Astrocyte of the cerebellum (primary cell): ENCODE measurements at regions of chr7 and their contacts with region 1.

Region 1: DNA sequence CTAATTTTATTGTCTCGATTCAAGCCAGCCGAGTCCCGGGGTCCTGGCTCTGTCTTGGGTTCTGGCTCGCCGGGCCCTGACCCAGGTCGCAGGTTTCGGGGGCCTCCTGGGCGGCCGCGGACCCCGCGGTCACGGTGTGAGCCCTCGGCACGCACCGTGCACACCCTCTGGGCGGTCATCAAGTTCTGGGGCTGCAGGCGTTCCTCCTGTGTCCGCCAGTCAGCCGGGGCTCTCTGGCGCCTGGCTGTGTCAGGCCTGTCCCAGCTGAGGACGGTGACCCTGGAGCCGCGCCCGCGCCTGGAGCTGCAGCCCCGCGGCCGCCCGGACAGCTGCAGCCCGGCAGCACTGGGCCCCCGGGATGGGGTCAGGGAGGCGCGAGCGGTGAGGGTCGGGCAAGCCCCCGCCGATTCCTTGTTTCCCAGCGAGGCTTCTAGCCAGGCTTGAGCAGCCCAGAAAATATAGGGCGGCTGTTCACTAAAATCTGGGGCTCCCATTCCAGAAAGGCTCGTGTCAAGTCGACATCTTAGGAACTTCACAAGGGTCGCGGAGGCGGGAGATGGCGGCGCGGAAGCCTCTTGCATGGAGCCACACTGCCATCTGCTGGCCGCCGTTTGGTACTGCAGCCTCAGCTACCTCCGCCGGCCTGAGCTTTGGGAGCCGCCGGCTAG is 4.2 kb upstream of the HOXA7 start:
- DNase-seq: peak; percentile 59
- H3K4me3 ChIP-seq: peak overlapping the region; percentile 43
- CTCF ChIP-seq: peak; percentile 92

Region 2: DNA sequence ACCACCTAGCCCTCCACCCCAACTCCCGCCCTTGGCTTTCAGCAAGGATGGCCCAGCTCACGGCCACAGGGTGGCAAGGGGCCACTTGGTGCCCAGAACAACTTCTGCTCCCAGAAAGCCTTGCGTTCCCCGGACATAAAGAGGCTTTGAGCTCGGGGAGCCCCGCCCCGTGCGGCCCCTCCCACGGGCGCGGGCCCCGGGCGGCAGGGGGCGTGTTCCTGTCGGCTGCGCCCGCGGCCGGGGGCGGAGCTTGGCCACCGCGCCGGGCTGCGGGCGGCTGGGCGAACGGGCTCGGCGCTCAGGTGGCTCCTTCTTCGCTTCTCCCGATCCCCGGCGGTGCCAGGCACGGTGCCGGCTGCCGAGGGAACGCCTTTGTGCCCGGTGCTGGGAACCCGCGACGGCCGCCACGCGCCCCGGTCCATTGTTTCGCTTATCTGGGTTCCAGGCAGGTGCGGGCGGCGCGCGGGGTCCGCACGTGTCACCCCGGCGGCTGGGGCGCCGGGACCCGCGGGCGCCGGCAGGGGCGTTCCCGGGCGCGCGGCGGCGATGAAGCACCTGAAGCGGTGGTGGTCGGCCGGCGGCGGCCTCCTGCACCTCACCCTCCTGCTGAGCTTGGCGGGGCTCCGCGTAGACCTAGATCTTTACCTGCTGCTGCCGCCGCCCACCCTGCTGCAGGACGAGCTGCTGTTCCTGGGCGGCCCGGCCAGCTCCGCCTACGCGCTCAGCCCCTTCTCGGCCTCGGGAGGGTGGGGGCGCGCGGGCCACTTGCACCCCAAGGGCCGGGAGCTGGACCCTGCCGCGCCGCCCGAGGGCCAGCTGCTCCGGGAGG is 1008.5 kb before region 1 on chr7 and contains the start of gene NFE2L3:
- in situ Hi-C with region 1: loop called (anchors 25 kb)
- DNase-seq: peak; percentile 18
- H3K4me3 ChIP-seq: peak within 1 kb of the TSS; percentile 53
- CTCF ChIP-seq: no peak

Region 3: GRCh38 chr7:26388256-26388655 is 772.4 kb before region 1 on chr7:
- in situ Hi-C with region 1: loop called (anchors 5 kb)
- DNase-seq: no peak
- H3K4me3 ChIP-seq: no peak overlapping the region
- CTCF ChIP-seq: no peak

Region 4: GRCh38 chr7:27098578-27099451 is 61.9 kb before region 1 on chr7:
- in situ Hi-C with region 1: no loop called
- DNase-seq: no peak
- H3K4me3 ChIP-seq: peak overlapping the region; percentile 91
- CTCF ChIP-seq: no peak